CD4-positive, alpha-beta T cell (primary cell): ENCODE measurements at regions of chr3 and their contacts with region 1.

Region 1: DNA sequence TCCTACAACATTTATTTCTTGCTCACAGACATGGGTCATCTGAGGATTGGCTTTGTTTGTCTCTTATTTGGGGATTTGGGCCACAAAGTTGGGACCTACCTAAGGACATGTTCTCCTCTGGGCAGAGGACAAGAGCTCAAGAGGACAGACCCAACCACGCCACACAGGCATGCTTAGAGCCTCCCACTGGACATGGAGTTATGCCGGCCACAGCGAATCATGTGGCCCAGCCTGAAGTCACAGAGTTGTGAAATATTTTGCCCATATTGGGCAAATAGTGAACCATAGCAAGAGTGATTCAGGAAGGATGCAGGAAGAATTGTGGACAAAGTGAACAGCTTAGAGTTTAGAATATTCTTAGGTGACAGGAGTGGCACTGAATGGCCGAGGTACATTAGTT is 9.9 kb downstream of the TRAK1 start:
- DNase-seq: peak in 2 of 14 experiments; percentile 35 to 42
- ATAC-seq: no peak
- H3K4me3 ChIP-seq: no peak overlapping the region
- H3K4me3 Mint-ChIP-seq: no peak overlapping the region
- H3K27ac ChIP-seq: no peak overlapping the region
- H3K27ac Mint-ChIP-seq: no peak overlapping the region
- H3K4me1 ChIP-seq: peaks cover 3% of the 10 kb centered on the region
- H3K4me1 Mint-ChIP-seq: no peaks in the 10 kb centered on the region
- H3K27me3 ChIP-seq: no peaks in the 10 kb centered on the region
- H3K27me3 Mint-ChIP-seq: no peaks in the 10 kb centered on the region
- CTCF ChIP-seq: no peak

Region 2: DNA sequence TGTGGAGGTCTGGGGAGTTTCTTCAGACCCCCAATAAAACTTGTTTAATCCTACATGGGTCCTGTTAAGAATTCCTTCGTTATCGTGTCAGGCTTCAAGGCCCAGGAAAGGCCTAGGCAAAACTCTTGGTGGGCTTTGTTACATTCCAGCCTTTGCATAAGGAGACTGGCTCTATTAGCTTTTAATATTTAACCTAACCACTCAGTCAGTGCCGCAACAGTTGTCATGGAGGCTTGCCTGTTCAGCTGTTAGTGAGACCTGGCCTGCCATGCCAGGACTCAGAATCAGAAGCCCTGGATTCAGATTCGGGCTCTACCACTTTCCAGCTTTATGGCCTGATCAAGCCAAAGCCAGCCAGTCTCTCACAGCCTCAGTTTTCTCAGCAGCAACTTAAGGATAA is 1772.0 kb before region 1 on chr3:
- CTCF ChIA-PET with region 1: no interaction called
- POLR2A ChIA-PET with region 1: no interaction called
- intact Hi-C with region 1: loop called (anchors 1 to 2 kb)
- DNase-seq: no peak
- ATAC-seq: no peak
- H3K4me3 ChIP-seq: no peak overlapping the region
- H3K4me3 Mint-ChIP-seq: no peak overlapping the region
- H3K27ac ChIP-seq: no peak overlapping the region
- H3K27ac Mint-ChIP-seq: no peak overlapping the region
- H3K4me1 ChIP-seq: no peaks in the 10 kb centered on the region
- H3K4me1 Mint-ChIP-seq: no peaks in the 10 kb centered on the region
- H3K27me3 ChIP-seq: no peaks in the 10 kb centered on the region
- H3K27me3 Mint-ChIP-seq: no peaks in the 10 kb centered on the region
- CTCF ChIP-seq: no peak

Region 3: GRCh38 chr3:40580494-40581091 is 1520.5 kb before region 1 on chr3:
- CTCF ChIA-PET with region 1: interaction called, 5 read pairs
- POLR2A ChIA-PET with region 1: no interaction called
- intact Hi-C with region 1: loop called (anchors 2 kb)
- DNase-seq: peak; percentile 38 to 75 (median 49)
- ATAC-seq: peak; percentile 76
- H3K4me3 ChIP-seq: no peak overlapping the region
- H3K4me3 Mint-ChIP-seq: no peak overlapping the region
- H3K27ac ChIP-seq: no peak overlapping the region
- H3K27ac Mint-ChIP-seq: no peak overlapping the region
- H3K4me1 ChIP-seq: peaks cover 3% of the 10 kb centered on the region
- H3K4me1 Mint-ChIP-seq: no peaks in the 10 kb centered on the region
- H3K27me3 ChIP-seq: peaks cover 0 to 2% of the 10 kb centered on the region in 2 experiments
- H3K27me3 Mint-ChIP-seq: peaks cover 8% of the 10 kb centered on the region
- CTCF ChIP-seq: peak; percentile 89

Region 4: GRCh38 chr3:40864146-40864782 is 1236.8 kb before region 1 on chr3:
- CTCF ChIA-PET with region 1: no interaction called
- POLR2A ChIA-PET with region 1: no interaction called
- intact Hi-C with region 1: no loop called
- DNase-seq: no peak
- ATAC-seq: no peak
- H3K4me3 ChIP-seq: no peak overlapping the region
- H3K4me3 Mint-ChIP-seq: no peak overlapping the region
- H3K27ac ChIP-seq: no peak overlapping the region
- H3K27ac Mint-ChIP-seq: no peak overlapping the region
- H3K4me1 ChIP-seq: no peaks in the 10 kb centered on the region
- H3K4me1 Mint-ChIP-seq: no peaks in the 10 kb centered on the region
- H3K27me3 ChIP-seq: no peaks in the 10 kb centered on the region
- H3K27me3 Mint-ChIP-seq: peaks cover 27% of the 10 kb centered on the region
- CTCF ChIP-seq: no peak

Region 5: GRCh38 chr3:41893977-41894376 is 207.1 kb before region 1 on chr3:
- CTCF ChIA-PET with region 1: interaction called, 10 read pairs
- POLR2A ChIA-PET with region 1: no interaction called
- intact Hi-C with region 1: loop called (anchors 1 kb)
- DNase-seq: peak in 4 of 14 experiments; percentile 30 to 59 (median 51)
- ATAC-seq: no peak
- H3K4me3 ChIP-seq: no peak overlapping the region
- H3K4me3 Mint-ChIP-seq: no peak overlapping the region
- H3K27ac ChIP-seq: no peak overlapping the region
- H3K27ac Mint-ChIP-seq: no peak overlapping the region
- H3K4me1 ChIP-seq: no peaks in the 10 kb centered on the region
- H3K4me1 Mint-ChIP-seq: no peaks in the 10 kb centered on the region
- H3K27me3 ChIP-seq: no peaks in the 10 kb centered on the region
- H3K27me3 Mint-ChIP-seq: no peaks in the 10 kb centered on the region
- CTCF ChIP-seq: peak; percentile 74

Region 6: DNA sequence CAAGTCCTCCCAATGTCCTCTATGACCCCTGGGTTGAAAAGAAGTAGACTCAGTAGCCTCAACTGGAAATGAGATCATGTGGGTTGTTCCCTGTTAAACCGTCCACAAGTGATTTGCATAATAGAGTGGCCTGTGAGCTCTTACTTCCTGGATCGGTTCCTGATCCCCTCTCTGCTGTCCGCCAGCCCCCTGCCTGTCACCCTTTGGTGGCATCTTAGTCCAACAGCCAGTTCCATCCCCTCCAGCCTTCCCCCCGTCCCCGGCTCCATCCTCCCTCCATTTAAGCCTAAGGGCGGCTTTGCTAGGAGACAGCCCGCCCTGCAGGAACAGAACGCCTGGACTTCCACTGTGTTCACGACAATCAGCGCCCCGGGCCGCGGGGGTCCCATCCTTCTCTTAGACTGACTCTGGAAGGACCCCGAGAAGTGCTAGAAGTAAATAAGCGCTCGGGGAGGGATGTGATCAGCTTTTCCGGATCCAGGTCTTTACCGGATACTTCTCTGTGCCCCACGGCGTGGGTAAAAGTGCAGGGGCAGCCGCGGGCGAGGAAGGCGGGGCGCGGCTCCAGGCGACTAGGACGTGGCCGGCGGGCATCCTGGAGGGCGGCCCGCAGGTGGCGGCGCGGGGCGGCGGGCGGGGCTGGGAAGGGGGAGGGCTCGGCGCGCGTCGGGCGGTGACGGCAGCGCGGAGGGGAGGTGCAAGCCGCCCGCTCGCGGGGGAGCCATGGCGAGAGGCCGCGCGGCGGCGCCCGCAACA is 87.9 kb before region 1 on chr3:
- CTCF ChIA-PET with region 1: interaction called, 3 read pairs
- POLR2A ChIA-PET with region 1: interaction called, 3 read pairs
- intact Hi-C with region 1: loop called in 1 of 2 experiments (anchors 5 kb)
- DNase-seq: peak; percentile 45 to 90 (median 68)
- ATAC-seq: peak; percentile 73
- H3K4me3 ChIP-seq: peak overlapping the region; percentile 78
- H3K4me3 Mint-ChIP-seq: peak overlapping the region; percentile 95
- H3K27ac ChIP-seq: peak overlapping the region; percentile 72 to 96
- H3K27ac Mint-ChIP-seq: peak overlapping the region; percentile 93
- H3K4me1 ChIP-seq: peaks cover 32% of the 10 kb centered on the region
- H3K4me1 Mint-ChIP-seq: peaks cover 38% of the 10 kb centered on the region
- H3K27me3 ChIP-seq: no peaks in the 10 kb centered on the region
- H3K27me3 Mint-ChIP-seq: no peaks in the 10 kb centered on the region
- CTCF ChIP-seq: no peak